Common myeloid progenitor, CD34-positive (primary cell): ENCODE measurements at regions of chr20 and their contacts with region 1.

Region 1: DNA sequence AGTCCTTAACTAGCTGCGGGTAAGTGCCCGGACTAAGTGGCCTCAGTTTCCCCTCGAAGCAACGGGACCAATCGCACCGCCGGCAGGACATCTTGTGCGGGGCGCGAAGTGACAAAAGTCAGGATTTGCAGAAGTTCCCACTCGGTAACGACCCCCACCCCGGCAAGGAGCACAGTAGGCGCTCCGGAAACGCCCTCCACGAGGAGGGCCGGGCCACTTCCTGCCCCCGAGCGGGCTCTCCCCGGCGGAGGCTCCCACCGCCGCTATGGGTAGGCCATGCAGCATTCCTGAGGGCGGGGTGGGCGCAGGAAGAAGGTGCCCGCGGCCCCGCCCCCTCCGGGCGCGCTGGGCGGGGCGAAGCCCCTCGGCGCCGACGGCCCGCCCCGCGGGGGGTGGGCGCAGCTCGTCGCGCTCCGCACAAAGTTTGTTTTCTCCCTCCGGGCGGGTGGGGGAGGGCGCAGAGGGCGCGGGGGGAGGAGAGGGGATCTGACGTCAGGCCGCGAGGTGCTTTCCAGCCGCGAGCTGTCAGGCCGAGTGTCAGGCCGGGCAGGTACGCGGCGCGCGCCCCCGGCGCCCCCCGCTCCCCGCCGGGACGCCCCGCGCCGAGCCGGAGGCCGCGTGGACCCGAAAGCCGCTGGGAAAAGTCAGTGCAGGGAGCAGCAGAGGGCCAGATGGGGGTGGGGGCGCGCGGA is at the start of gene TGIF2:
- DNase-seq: peak; percentile 88 to 95 (median 95)
- H3K4me3 ChIP-seq: peak within 1 kb of the TSS; percentile 73 to 89 (median 81)
- H3K27ac ChIP-seq: peak within 1 kb of the TSS; percentile 94 to 96
- H3K4me1 ChIP-seq: peaks cover 2 to 44% (median 36%) of the 10 kb centered on the region in 4 experiments
- H3K27me3 ChIP-seq: no peaks in the 10 kb centered on the region

Region 2: GRCh38 chr20:36377352-36378326 is 195.6 kb before region 1 on chr20:
- CTCF ChIA-PET with region 1: no interaction called
- POLR2A ChIA-PET with region 1: no interaction called
- DNase-seq: no peak
- H3K4me3 ChIP-seq: no peak overlapping the region
- H3K27ac ChIP-seq: no peak overlapping the region
- H3K4me1 ChIP-seq: no peaks in the 10 kb centered on the region
- H3K27me3 ChIP-seq: peaks cover 0 to 31% (median 10%) of the 10 kb centered on the region in 5 experiments

Region 3: DNA sequence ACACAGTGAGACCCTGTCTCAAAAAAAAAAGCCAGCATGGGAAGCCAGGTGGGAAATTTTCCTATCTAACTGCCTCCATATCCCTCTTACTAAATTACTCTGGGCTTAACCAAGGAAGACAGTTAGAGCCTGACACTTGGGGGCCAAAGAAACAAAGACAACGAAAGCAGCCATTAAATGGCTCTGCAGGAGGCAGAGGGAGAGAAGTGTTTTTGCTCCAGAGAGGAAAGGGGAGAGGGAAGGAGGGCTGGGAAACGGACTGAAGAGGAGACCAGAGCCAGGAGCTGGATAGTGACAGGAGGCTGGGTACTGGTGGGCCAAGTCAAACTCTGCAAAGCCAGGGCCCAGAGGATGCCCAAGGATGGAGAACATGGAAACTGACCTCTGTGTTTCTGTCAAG is 10.5 kb before region 1 on chr20:
- CTCF ChIA-PET with region 1: interaction called, 36 read pairs
- POLR2A ChIA-PET with region 1: interaction called, 3 read pairs
- DNase-seq: no peak
- H3K4me3 ChIP-seq: no peak overlapping the region
- H3K27ac ChIP-seq: no peak overlapping the region
- H3K4me1 ChIP-seq: no peaks in the 10 kb centered on the region
- H3K27me3 ChIP-seq: no peaks in the 10 kb centered on the region

Region 4: GRCh38 chr20:36591854-36592641 is 18.8 kb after region 1 on chr20:
- CTCF ChIA-PET with region 1: interaction called, 108 read pairs
- POLR2A ChIA-PET with region 1: interaction called, 7 read pairs
- DNase-seq: peak in 1 of 3 donors; percentile 34
- H3K4me3 ChIP-seq: no peak overlapping the region
- H3K27ac ChIP-seq: peak overlapping the region in 1 of 2 experiments; percentile 43
- H3K4me1 ChIP-seq: peaks cover 4 to 13% (median 7%) of the 10 kb centered on the region in 4 experiments
- H3K27me3 ChIP-seq: no peaks in the 10 kb centered on the region

Region 5: GRCh38 chr20:36605399-36606157 is 32.3 kb after region 1 on chr20 and contains the start of gene RAB5IF:
- CTCF ChIA-PET with region 1: interaction called, 21 read pairs
- POLR2A ChIA-PET with region 1: interaction called, 12 read pairs
- DNase-seq: peak; percentile 99 to 100 (median 99)
- H3K4me3 ChIP-seq: peak within 1 kb of the TSS; percentile 81 to 99 (median 96)
- H3K27ac ChIP-seq: peak within 1 kb of the TSS; percentile 82 to 92
- H3K4me1 ChIP-seq: peaks cover 8 to 38% (median 26%) of the 10 kb centered on the region in 4 experiments
- H3K27me3 ChIP-seq: no peaks in the 10 kb centered on the region